ENCODE measurements at regions of chr22 and their contacts with region 1.

Region 1: GRCh38 chr22:37260901-37261336 is 16.9 kb upstream of the RAC2 start:
- DNase-seq: peak; percentile 55
- H3K4me3 Mint-ChIP-seq: no peak overlapping the region
- H3K27ac Mint-ChIP-seq: no peak overlapping the region
- H3K4me1 Mint-ChIP-seq: peaks cover 26% of the 10 kb centered on the region
- H3K27me3 Mint-ChIP-seq: peaks cover 8% of the 10 kb centered on the region

Region 2: DNA sequence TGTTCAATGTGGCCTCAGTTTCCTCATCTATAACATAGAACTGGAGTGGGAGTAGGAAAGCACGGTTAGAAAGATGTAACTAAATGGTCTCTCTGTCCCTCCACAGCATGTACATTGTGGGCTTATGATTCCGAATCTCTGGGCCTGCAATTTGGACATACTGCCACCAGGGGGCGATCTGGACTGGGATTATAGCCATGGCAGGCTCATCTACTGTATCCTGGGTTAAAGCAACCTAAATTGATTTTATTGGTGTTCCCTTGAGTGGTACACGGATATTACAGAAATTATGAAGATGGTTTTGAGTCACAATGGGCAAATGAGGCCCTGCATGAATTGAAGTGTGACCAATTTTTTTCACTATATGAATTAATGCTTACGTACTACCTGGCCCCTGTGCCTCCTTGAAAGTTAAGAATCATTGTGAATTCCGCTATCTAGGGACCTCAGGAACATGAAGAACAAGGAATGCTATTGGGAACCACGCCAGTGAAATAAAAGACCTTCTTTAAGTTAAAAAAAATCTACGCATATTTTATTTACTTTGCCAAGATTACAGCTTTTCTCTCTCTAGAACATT is 274.6 kb before region 1 on chr22:
- intact Hi-C with region 1: loop called (anchors 1 kb)
- DNase-seq: no peak
- H3K4me3 Mint-ChIP-seq: no peak overlapping the region
- H3K27ac Mint-ChIP-seq: no peak overlapping the region
- H3K4me1 Mint-ChIP-seq: peaks cover 4% of the 10 kb centered on the region
- H3K27me3 Mint-ChIP-seq: peaks cover 28% of the 10 kb centered on the region